ENCODE measurements at regions of chr11 and their contacts with region 1.

Region 1: GRCh38 chr11:18865951-18866350 is 73.3 kb downstream of the MRGPRX1 start:
- DNase-seq: peak; percentile 55
- ATAC-seq: peak; percentile 99
- H3K4me3 Mint-ChIP-seq: peak overlapping the region; percentile 41; the same call in 1 of the 2 replicates
- H3K27ac Mint-ChIP-seq: peak overlapping the region; percentile 75
- H3K4me1 Mint-ChIP-seq: peaks cover 23% of the 10 kb centered on the region
- H3K27me3 Mint-ChIP-seq: peaks cover 14% of the 10 kb centered on the region
- CTCF ChIP-seq: no peak

Region 2: GRCh38 chr11:18844753-18845367 is 21.1 kb before region 1 on chr11:
- CTCF ChIA-PET with region 1: interaction called, 17 read pairs
- POLR2A ChIA-PET with region 1: no interaction called
- DNase-seq: no peak
- ATAC-seq: peak; percentile 100
- H3K4me3 Mint-ChIP-seq: no peak overlapping the region
- H3K27ac Mint-ChIP-seq: no peak overlapping the region
- H3K4me1 Mint-ChIP-seq: peaks cover 10% of the 10 kb centered on the region
- H3K27me3 Mint-ChIP-seq: peaks cover 42% of the 10 kb centered on the region
- CTCF ChIP-seq: peak; percentile 42; the same call in 1 of the 2 replicates

Region 3: DNA sequence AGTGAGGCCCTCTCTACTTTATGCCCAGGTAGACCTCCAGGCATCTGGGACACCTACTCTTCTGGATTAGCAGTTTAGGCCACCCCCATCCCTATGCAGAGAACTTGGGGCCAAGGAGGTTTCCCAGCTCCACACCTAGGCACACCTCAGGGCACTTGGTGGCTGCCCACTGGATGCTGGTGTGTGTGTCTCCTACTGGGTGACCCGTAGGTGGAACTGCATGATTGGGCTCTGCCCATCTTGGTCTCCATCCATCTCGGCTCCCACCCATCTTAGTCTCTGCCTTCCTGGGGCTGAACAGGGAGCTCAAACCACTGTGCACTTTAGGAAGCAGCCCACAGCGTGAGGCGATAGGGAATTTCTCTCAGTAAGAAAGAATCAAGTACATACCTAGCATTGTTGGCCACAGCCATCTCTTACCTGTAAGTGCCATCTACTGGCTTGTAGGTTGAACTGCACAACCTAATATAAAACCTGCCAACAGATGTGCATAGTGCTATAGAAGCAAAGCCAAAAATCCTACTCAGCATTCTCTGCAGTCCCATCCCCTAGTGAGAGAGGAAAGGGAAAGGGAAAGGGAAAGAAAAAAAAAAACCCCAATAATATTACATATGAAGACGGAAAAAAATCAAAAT is 12.7 kb before region 1 on chr11:
- CTCF ChIA-PET with region 1: interaction called, 12 read pairs
- POLR2A ChIA-PET with region 1: no interaction called
- DNase-seq: peak; percentile 36
- ATAC-seq: peak; percentile 98
- H3K4me3 Mint-ChIP-seq: no peak overlapping the region
- H3K27ac Mint-ChIP-seq: no peak overlapping the region
- H3K4me1 Mint-ChIP-seq: peaks cover 3% of the 10 kb centered on the region
- H3K27me3 Mint-ChIP-seq: peaks cover 31% of the 10 kb centered on the region
- CTCF ChIP-seq: peak; percentile 45; the same call in 1 of the 2 replicates

Region 4: GRCh38 chr11:18878211-18878610 is 12.3 kb after region 1 on chr11:
- CTCF ChIA-PET with region 1: no interaction called
- POLR2A ChIA-PET with region 1: no interaction called
- DNase-seq: no peak
- ATAC-seq: no peak
- H3K4me3 Mint-ChIP-seq: no peak overlapping the region
- H3K27ac Mint-ChIP-seq: no peak overlapping the region
- H3K4me1 Mint-ChIP-seq: no peaks in the 10 kb centered on the region
- H3K27me3 Mint-ChIP-seq: peaks cover 19% of the 10 kb centered on the region
- CTCF ChIP-seq: no peak